ENCODE measurements at regions of chr9 and their contacts with region 1.

Region 1: GRCh38 chr9:111161015-111161415 is 122.7 kb upstream of the LPAR1 start:
- DNase-seq: peak; percentile 48
- H3K4me3 ChIP-seq: no peak overlapping the region
- CTCF ChIP-seq: no peak

Region 2: GRCh38 chr9:111114486-111114885 is 46.5 kb before region 1 on chr9:
- in situ Hi-C with region 1: loop called (anchors 5 kb)
- DNase-seq: no peak
- H3K4me3 ChIP-seq: no peak overlapping the region
- CTCF ChIP-seq: no peak

Region 3: DNA sequence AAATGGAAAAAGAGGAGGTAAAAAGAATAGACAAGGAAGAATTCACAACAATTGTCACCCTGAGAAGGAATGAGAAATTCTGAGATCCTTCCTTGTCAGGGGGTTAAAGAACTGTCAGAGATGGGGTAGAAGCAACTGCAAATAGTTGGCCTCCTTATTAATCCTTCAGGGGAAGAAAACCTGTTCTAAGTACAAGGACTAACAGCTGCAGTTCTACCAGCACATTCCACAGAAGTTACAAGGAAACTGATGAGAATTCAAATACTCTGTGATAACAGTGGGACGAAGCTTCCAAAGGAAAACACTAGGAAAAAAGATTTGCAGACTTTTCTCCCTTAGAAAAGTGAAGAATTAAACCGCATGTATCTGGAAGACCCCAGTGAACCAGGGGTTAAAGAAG is 75.3 kb after region 1 on chr9:
- in situ Hi-C with region 1: loop called (anchors 5 kb)
- DNase-seq: no peak
- H3K4me3 ChIP-seq: no peak overlapping the region
- CTCF ChIP-seq: no peak